Endothelial cell of umbilical vein (primary cell): ENCODE measurements at regions of chr12 and their contacts with region 1.

Region 1: DNA sequence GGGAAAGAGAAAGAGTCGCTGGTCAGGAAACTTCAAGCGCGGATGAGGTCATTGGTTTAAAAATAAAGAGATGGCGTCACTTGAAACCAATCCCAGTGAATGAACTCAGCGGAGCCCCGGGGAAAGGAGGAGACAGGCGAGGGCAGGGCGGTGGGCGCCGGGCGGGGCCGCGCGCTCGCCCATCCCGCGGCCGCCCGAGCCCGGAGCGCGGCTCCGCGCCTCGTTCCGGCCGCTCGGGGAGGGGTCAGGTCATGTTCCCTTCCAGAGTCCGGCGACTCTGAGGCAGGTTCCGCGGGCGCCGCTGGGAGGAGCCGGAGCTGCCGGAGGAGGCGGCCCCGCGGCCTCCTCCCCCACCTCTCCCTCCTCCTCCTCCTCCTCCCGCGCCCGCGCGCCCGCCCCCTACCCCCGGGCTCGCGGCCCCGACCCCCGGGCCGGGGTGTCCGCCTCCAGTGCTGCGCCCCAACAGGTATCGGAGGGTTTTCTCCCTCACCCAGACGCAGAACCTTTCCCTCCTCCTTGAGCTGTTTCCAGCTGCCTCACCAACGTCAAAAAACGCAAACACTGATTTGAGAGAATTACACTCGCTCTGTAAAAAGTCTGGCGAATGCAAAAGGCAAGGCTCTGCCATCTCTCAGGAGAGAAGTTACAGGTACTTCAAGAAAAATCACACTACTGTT is at the start of gene DUSP16:
- DNase-seq: peak; percentile 95
- H3K4me3 ChIP-seq: peak within 1 kb of the TSS; percentile 39 to 95 (median 89)
- H3K27ac ChIP-seq: peak within 1 kb of the TSS; percentile 77
- H3K4me1 ChIP-seq: peaks cover 21% of the 10 kb centered on the region
- H3K27me3 ChIP-seq: peaks cover 0 to 6% of the 10 kb centered on the region in 2 experiments
- CTCF ChIP-seq: no peak
- POLR2A ChIP-seq: peak; percentile 56
- total RNA-seq, gene DUSP16: 12.7 and 19.5 TPM in 2 replicates

Region 2: DNA sequence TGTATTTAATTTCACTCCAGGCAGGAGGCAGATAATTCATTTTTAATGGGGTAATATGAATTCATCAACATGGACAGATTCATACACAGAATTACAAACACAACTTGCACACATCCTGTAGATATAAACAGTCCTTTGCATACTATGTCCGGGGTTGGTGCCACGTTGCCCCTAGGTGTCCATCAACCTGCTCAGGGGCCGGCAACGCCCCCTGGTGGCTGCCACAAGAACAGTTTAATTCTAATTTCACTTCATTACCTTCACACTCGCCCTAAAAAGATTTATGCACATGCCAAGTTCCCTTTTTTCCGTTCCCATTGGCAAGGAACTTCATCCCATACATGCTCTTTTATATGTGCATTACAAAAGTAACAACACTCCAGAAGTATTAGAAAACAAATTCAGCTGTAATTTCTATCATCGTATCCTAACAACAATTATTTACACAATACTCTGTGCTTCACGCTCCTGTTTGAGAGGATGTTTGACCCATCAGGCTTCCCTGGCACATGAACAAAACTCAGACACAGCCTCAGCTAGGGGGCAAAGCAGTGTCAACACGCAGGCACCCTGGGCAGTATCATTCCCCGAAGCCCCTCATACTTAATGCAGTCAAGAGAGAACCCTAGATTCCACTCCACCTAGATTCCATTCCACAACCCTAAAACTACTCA is 228.2 kb before region 1 on chr12:
- CTCF ChIA-PET with region 1: no interaction called
- POLR2A ChIA-PET with region 1: no interaction called
- dilution Hi-C with region 1: no loop called
- intact Hi-C with region 1: loop called (anchors 1 kb)
- DNase-seq: peak; percentile 67
- H3K4me3 ChIP-seq: no peak overlapping the region
- H3K27ac ChIP-seq: no peak overlapping the region
- H3K4me1 ChIP-seq: peaks cover 44% of the 10 kb centered on the region
- H3K27me3 ChIP-seq: no peaks in the 10 kb centered on the region
- CTCF ChIP-seq: peak; percentile 76 to 83
- POLR2A ChIP-seq: peak; percentile 40

Region 3: GRCh38 chr12:12384571-12385340 is 178.0 kb before region 1 on chr12:
- CTCF ChIA-PET with region 1: interaction called, 71 read pairs
- POLR2A ChIA-PET with region 1: no interaction called
- dilution Hi-C with region 1: no loop called
- intact Hi-C with region 1: no loop called
- DNase-seq: no peak
- H3K4me3 ChIP-seq: no peak overlapping the region
- H3K27ac ChIP-seq: no peak overlapping the region
- H3K4me1 ChIP-seq: peaks cover 6% of the 10 kb centered on the region
- H3K27me3 ChIP-seq: no peaks in the 10 kb centered on the region
- CTCF ChIP-seq: no peak
- POLR2A ChIP-seq: no peak

Region 4: DNA sequence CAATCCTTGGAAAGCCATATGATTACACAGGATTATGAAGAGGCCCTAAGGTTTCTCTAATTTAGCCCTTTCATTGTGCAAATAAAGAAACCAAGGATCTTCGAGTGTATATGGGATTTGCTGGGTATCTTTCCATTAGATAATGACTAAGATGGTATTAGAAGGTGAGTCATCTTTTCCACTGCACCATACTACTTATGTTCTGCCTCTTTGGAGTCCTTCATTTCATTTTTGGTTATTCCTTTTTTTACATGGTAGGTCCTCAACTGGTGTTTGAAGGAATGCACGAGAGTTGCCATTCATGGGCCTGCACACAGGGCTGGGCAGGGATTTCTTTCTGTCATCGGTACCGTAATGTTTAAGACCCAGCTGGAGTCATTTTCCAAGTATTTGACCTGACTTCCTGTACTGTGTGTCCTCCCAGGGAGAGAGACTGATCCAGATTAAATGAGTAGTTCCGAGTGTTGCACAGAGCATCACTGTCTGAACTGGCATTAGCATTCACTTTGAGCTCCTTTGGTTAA is 120.1 kb before region 1 on chr12:
- CTCF ChIA-PET with region 1: no interaction called
- POLR2A ChIA-PET with region 1: no interaction called
- dilution Hi-C with region 1: no loop called
- intact Hi-C with region 1: loop called (anchors 1 kb)
- DNase-seq: peak; percentile 75
- H3K4me3 ChIP-seq: no peak overlapping the region
- H3K27ac ChIP-seq: peak overlapping the region; percentile 83
- H3K4me1 ChIP-seq: peaks cover 54% of the 10 kb centered on the region
- H3K27me3 ChIP-seq: no peaks in the 10 kb centered on the region
- CTCF ChIP-seq: no peak
- POLR2A ChIP-seq: no peak

Region 5: GRCh38 chr12:12548713-12549112 is 14.0 kb before region 1 on chr12:
- CTCF ChIA-PET with region 1: interaction called, 15 read pairs
- POLR2A ChIA-PET with region 1: no interaction called
- dilution Hi-C with region 1: no loop called
- intact Hi-C with region 1: no loop called
- DNase-seq: no peak
- H3K4me3 ChIP-seq: no peak overlapping the region
- H3K27ac ChIP-seq: no peak overlapping the region
- H3K4me1 ChIP-seq: no peaks in the 10 kb centered on the region
- H3K27me3 ChIP-seq: no peaks in the 10 kb centered on the region
- CTCF ChIP-seq: no peak
- POLR2A ChIP-seq: no peak

Region 6: DNA sequence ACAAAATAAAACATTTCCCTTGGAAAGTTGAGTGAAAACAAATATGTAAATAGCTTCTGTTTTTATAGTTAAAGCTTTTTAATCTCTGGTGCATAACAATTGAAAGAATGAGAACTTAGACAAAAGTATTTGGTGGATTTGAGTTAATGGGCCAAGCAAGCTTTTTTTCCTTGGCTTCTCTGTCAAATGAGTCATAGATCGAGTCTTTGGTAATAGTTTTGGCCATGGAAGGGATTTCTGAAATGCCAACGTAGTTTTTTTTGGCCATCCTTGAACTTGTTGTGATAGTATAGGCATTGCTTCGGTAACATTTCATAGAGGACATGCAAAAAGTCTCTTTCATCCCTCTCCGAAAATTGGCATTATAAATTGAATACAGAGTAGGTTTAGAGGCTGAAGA is 98.4 kb after region 1 on chr12:
- CTCF ChIA-PET with region 1: no interaction called
- POLR2A ChIA-PET with region 1: no interaction called
- dilution Hi-C with region 1: no loop called
- intact Hi-C with region 1: loop called (anchors 1 kb)
- DNase-seq: no peak
- H3K4me3 ChIP-seq: no peak overlapping the region
- H3K27ac ChIP-seq: no peak overlapping the region
- H3K4me1 ChIP-seq: no peaks in the 10 kb centered on the region
- H3K27me3 ChIP-seq: peaks cover 5 to 8% of the 10 kb centered on the region in 2 experiments
- CTCF ChIP-seq: no peak
- POLR2A ChIP-seq: no peak

Region 7: DNA sequence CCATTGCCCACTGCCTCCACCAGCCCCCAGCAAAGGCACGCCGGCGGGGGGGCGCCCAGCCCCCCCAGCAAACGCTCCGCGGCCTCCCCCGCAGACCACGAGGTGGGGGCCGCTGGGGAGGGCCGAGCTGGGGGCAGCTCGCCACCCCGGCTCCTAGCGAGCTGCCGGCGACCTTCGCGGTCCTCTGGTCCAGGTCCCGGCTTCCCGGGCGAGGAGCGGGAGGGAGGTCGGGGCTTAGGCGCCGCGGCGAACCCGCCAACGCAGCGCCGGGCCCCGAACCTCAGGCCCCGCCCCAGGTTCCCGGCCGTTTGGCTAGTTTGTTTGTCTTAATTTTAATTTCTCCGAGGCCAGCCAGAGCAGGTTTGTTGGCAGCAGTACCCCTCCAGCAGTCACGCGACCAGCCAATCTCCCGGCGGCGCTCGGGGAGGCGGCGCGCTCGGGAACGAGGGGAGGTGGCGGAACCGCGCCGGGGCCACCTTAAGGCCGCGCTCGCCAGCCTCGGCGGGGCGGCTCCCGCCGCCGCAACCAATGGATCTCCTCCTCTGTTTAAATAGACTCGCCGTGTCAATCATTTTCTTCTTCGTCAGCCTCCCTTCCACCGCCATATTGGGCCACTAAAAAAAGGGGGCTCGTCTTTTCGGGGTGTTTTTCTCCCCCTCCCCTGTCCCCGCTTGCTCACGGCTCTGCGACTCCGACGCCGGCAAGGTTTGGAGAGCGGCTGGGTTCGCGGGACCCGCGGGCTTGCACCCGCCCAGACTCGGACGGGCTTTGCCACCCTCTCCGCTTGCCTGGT is 154.3 kb after region 1 on chr12 and contains the start of gene CDKN1B:
- CTCF ChIA-PET with region 1: no interaction called
- POLR2A ChIA-PET with region 1: no interaction called
- dilution Hi-C with region 1: no loop called
- intact Hi-C with region 1: loop called (anchors 5 kb)
- DNase-seq: peak; percentile 98
- H3K4me3 ChIP-seq: peak within 1 kb of the TSS; percentile 67 to 99 (median 95)
- H3K27ac ChIP-seq: peak within 1 kb of the TSS; percentile 98
- H3K4me1 ChIP-seq: peaks cover 49% of the 10 kb centered on the region
- H3K27me3 ChIP-seq: no peaks in the 10 kb centered on the region
- CTCF ChIP-seq: no peak
- POLR2A ChIP-seq: peak; percentile 79
- total RNA-seq, gene CDKN1B: 32.0 and 40.8 TPM in 2 replicates